Right lobe of liver (tissue), 6 donors: ENCODE measurements at regions of chr9 and their contacts with region 1.

Region 1: GRCh38 chr9:93302551-93303257 is 118.8 kb downstream of the WNK2 start:
- DNase-seq: peak; percentile 63 to 70 (median 70)
- ATAC-seq: peak; percentile 68 to 80 (median 78)
- H3K4me3 ChIP-seq: no peak overlapping the region
- H3K27ac ChIP-seq: no peak overlapping the region
- H3K4me1 ChIP-seq: no peaks in the 10 kb centered on the region
- H3K27me3 ChIP-seq: no peaks in the 10 kb centered on the region
- CTCF ChIP-seq: peak; percentile 56 to 68 (median 62)
- POLR2A ChIP-seq: no peak

Region 2: DNA sequence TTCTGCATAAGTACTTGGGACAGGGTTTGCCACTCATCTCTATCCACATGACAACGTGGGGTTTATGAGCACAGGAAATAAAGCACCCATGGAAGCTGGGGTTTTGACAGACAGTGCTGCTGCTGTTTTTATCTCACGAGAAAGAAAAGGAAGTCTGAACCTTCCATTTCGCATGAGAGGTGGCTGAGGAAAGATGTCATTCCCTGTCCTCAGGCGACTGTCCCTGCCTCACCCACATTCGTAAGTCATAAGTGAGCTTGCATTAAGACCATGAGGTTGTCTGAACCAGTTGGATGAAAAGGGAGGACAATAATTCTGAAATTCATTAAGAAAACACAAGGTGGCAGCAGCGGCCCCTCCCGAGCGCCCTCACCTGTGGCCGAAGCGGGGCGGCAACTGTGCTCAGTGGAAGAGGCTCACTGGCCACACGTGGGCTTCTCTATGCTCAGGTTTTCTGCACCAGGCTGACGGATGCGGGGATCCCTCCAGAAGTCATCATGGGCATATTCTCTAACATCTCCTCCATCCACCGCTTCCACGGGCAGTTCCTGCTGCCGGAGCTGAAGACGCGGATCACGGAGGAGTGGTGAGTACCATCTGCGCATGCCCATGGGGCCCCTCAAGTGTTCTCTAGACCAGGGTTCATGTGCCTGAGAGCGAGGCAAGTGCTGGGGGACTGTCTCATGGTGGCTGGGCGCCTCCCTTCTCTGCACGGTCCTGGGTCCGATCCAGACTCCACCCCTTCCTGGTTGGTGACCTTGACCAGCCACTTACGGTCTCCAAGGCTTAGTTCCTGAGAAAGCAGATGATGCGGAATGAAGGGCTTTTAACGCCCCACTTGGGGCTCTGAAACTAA is 298.9 kb before region 1 on chr9:
- intact Hi-C with region 1: loop called in 1 of 2 experiments (anchors 10 kb)
- DNase-seq: peak in 2 of 3 donors; percentile 73 to 74
- ATAC-seq: peak; percentile 97 to 100 (median 99)
- H3K4me3 ChIP-seq: peak overlapping the region in 2 of 3 donors; percentile 2 to 37
- H3K27ac ChIP-seq: no peak overlapping the region
- H3K4me1 ChIP-seq: peaks cover 0 to 5% (median 0%) of the 10 kb centered on the region in 4 donors
- H3K27me3 ChIP-seq: no peaks in the 10 kb centered on the region
- CTCF ChIP-seq: peak; percentile 68 to 76 (median 73)
- POLR2A ChIP-seq: no peak

Region 3: GRCh38 chr9:93111371-93112115 is 191.2 kb before region 1 on chr9:
- intact Hi-C with region 1: loop called (anchors 5 to 10 kb)
- DNase-seq: peak; percentile 33 to 65 (median 53)
- ATAC-seq: no peak
- H3K4me3 ChIP-seq: no peak overlapping the region
- H3K27ac ChIP-seq: peak overlapping the region in 1 of 3 donors; percentile 29
- H3K4me1 ChIP-seq: peaks cover 0 to 5% (median 3%) of the 10 kb centered on the region in 4 donors
- H3K27me3 ChIP-seq: no peaks in the 10 kb centered on the region
- CTCF ChIP-seq: no peak
- POLR2A ChIP-seq: no peak

Region 4: DNA sequence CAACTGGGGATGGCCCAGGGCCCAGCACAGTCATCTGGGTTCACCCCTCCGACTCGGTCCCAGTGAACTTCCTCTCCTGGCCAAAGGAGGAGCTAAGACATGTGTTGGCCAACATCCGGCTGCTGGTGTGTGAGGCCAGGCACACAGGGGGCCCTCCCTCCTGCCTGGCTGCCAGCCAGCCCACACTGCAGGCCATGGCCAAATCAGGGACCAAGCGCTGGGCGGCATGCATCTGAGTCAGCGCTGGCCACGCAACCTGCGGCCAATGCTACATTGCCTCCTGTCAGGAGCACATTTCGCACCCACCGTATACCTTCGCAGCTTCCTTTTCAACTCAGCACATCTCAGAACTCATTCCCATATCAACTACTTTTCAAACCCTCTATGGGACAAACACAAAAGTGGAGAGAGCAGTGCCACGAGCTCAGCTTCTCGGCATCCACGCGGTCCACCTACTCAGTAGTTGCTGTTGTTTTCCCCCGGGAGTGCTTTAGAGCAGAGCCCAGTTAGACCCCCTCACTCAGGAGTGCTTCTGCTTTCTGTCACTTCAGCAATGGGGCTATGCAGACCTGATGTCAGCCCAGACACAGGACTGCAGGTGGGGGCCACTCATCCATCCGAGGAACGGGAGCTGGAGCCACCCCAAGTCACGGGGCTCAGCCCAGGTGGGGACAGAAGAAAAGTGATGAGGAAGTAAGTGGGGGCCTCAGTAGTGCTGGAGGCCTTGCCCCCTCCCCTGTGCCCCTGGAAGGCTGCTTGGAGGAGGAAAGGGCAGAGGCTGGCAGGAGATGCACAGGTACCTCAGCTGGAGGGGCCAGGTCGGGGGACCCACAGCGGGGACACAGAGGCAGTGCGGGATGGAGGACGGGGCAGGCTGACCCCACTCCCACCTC is 182.5 kb before region 1 on chr9:
- intact Hi-C with region 1: loop called in 1 of 2 experiments (anchors 10 kb)
- DNase-seq: peak; percentile 94 to 98 (median 96)
- ATAC-seq: peak; percentile 80 to 83 (median 81)
- H3K4me3 ChIP-seq: no peak overlapping the region
- H3K27ac ChIP-seq: peak overlapping the region; percentile 13 to 78 (median 47)
- H3K4me1 ChIP-seq: peaks cover 0 to 25% (median 6%) of the 10 kb centered on the region in 4 donors
- H3K27me3 ChIP-seq: no peaks in the 10 kb centered on the region
- CTCF ChIP-seq: peak; percentile 19 to 57 (median 38)
- POLR2A ChIP-seq: no peak

Region 5: GRCh38 chr9:93159601-93160471 is 142.9 kb before region 1 on chr9:
- intact Hi-C with region 1: loop called (anchors 5 kb)
- DNase-seq: peak; percentile 88 to 90 (median 89)
- ATAC-seq: peak; percentile 97 to 100 (median 100)
- H3K4me3 ChIP-seq: no peak overlapping the region
- H3K27ac ChIP-seq: no peak overlapping the region
- H3K4me1 ChIP-seq: no peaks in the 10 kb centered on the region
- H3K27me3 ChIP-seq: no peaks in the 10 kb centered on the region
- CTCF ChIP-seq: peak; percentile 95 to 97 (median 96)
- POLR2A ChIP-seq: no peak

Region 6: DNA sequence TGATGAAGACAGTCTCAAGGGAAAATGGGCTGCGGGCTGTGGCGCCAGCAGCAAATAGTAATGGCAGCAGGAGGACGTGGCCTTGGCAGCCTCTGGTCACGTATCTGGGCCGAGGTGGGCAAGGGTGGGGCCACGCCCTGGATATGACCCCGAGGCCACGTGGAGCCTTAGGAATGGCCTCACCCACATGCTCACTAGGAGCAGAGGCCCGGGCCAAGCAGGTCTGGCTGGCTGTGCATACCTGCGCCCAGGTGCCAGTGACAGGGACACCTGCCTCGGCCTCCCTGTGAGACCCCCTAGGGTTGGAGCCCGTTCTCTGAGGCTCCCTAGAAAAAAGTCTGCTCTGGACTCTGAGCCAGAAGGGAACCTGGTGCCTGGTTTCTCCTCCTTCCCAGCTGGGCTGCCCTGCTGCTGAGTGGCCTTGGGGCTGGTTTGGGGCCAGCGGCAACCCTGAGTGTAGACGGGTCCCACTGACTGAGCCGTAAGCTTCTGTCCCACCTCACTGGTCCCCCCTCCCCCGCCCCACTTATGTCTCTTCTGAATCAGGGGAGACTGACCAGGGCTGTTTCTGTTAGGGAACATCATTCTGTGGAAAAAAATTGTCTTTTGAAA is 58.1 kb before region 1 on chr9:
- intact Hi-C with region 1: loop called in 1 of 2 experiments (anchors 5 kb)
- DNase-seq: no peak
- ATAC-seq: no peak
- H3K4me3 ChIP-seq: no peak overlapping the region
- H3K27ac ChIP-seq: no peak overlapping the region
- H3K4me1 ChIP-seq: no peaks in the 10 kb centered on the region
- H3K27me3 ChIP-seq: no peaks in the 10 kb centered on the region
- CTCF ChIP-seq: no peak
- POLR2A ChIP-seq: no peak